GM13976 (cell line): ENCODE measurements at regions of chr11 and their contacts with region 1.

Region 1: GRCh38 chr11:74570266-74571061 is 21.9 kb upstream of the POLD3 start:
- DNase-seq: peak; percentile 52
- CTCF ChIP-seq: peak; percentile 65

Region 2: GRCh38 chr11:74453373-74453975 is 117.0 kb before region 1 on chr11:
- in situ Hi-C with region 1: loop called (anchors 10 kb)
- DNase-seq: peak; percentile 61
- CTCF ChIP-seq: peak; percentile 63